AG04450 (cell line): ENCODE measurements at regions of chr4 and their contacts with region 1.

Region 1: GRCh38 chr4:177250056-177250696 is 59.5 kb upstream of the NEIL3 start:
- DNase-seq: peak; percentile 47
- H3K4me3 ChIP-seq: no peak overlapping the region
- H3K27ac ChIP-seq: no peak overlapping the region
- H3K27me3 ChIP-seq: no peaks in the 10 kb centered on the region
- CTCF ChIP-seq: peak; percentile 100

Region 2: GRCh38 chr4:176534566-176534965 is 715.6 kb before region 1 on chr4:
- CTCF ChIA-PET with region 1: no interaction called
- POLR2A ChIA-PET with region 1: no interaction called
- DNase-seq: peak; percentile 59
- H3K4me3 ChIP-seq: no peak overlapping the region
- H3K27ac ChIP-seq: no peak overlapping the region
- H3K27me3 ChIP-seq: no peaks in the 10 kb centered on the region
- CTCF ChIP-seq: no peak

Region 3: DNA sequence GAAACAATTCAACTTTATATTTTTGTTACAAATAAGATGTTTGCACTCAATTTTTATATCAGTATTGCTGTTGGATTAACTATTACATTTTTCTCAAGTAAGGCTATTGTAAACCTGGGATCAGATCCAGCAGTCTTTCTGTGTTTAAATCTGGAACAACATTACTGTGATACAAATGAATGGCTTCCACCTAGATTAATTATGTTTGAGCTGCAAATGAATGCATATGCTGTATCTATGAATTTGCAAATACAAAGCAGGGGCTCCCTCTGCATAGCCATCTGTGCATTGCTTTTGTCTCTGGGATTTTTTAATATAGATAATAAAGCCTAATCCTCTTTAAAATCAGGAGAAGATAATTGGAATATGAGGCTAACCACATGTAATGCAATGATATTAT is 10.3 kb before region 1 on chr4:
- CTCF ChIA-PET with region 1: interaction called, 21 read pairs
- POLR2A ChIA-PET with region 1: no interaction called
- DNase-seq: no peak
- H3K4me3 ChIP-seq: no peak overlapping the region
- H3K27ac ChIP-seq: no peak overlapping the region
- H3K27me3 ChIP-seq: no peaks in the 10 kb centered on the region
- CTCF ChIP-seq: peak; percentile 36

Region 4: DNA sequence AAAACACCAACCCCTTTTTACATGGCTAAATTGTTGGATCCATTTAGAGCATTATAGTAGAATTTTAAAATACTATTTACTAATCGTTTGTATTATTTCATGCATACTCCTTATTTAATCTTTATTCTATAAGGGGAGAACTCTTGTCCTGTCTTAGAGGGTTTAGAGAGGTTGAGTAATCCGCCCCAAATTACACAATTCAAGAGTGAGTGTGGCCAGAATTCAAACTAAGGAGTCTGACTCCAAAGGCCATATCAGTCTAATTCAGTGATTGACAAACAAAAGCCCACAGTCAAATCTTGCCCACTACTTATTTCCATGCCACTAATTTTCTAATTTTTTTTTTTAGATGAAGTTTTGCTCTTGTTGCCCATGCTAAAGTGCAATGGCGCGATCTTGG is 25.8 kb after region 1 on chr4:
- CTCF ChIA-PET with region 1: interaction called, 10 read pairs
- POLR2A ChIA-PET with region 1: no interaction called
- DNase-seq: no peak
- H3K4me3 ChIP-seq: no peak overlapping the region
- H3K27ac ChIP-seq: no peak overlapping the region
- H3K27me3 ChIP-seq: no peaks in the 10 kb centered on the region
- CTCF ChIP-seq: no peak

Region 5: DNA sequence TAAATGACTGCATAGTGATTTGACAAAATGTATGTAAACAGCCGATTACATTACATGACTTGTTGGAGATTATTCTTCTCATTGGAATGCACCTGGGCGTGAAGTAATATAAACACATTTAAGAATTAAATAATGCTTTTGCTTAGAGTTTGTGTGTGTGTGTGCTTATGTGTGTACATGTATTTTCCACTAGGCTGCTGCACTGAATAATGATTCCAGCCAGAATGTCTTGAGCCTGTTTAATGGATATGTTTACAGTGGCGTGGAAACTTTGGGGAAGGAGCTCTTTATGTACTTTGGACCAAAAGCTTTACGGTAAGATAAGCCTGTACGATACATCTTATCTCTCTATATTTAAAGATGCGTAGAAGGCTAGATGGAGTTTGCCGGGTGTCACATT is 72.1 kb after region 1 on chr4:
- CTCF ChIA-PET with region 1: interaction called, 12 read pairs
- POLR2A ChIA-PET with region 1: no interaction called
- DNase-seq: no peak
- H3K4me3 ChIP-seq: peak overlapping the region; percentile 23; the same call in 1 of the 2 replicates
- H3K27ac ChIP-seq: no peak overlapping the region
- H3K27me3 ChIP-seq: no peaks in the 10 kb centered on the region
- CTCF ChIP-seq: no peak

Region 6: DNA sequence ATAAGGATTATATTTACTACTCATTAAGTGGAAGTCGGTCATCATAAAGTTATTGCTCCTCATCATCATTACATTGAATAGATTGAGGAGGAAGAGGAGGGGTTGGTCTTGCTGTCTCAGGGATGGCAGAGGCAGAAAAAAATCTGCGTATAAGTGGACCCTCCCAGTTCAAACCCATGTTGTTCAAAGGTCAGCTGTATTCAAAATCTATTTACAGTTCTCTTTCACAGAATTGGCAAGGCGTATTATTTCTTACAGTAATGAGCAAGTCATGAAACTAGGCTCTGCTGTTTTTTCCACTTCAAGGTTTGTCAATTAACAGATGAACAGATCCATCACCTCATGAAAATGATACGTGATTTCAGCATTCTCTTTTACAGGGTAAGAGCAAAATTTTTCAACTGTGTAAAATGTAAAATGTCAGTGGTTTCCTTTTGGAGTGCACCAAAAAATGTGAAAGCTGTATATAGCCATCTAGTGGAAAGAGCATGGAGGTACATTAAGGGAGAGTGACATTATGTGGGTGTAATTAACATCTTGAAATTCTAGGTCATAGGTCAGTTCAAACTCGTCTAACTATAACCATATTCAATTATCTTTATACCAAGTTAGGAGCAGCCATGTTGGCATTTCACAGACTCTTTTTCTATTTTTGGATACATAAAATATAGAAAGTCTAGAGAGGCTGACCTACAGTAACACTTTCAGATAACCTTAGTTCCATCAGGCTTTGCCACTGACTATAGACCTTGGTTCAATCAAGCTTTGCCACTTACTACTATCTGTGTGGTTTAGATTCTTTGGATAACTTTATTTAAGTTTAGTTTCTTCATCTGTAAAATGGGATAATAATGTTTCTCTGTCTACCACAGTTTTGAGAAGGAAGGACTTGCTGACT is 89.5 kb after region 1 on chr4:
- CTCF ChIA-PET with region 1: interaction called, 93 read pairs
- POLR2A ChIA-PET with region 1: no interaction called
- DNase-seq: peak; percentile 8
- H3K4me3 ChIP-seq: no peak overlapping the region
- H3K27ac ChIP-seq: no peak overlapping the region
- H3K27me3 ChIP-seq: no peaks in the 10 kb centered on the region
- CTCF ChIP-seq: peak; percentile 81